AG04449 (cell line): ENCODE measurements at regions of chr4 and their contacts with region 1.

Region 1: DNA sequence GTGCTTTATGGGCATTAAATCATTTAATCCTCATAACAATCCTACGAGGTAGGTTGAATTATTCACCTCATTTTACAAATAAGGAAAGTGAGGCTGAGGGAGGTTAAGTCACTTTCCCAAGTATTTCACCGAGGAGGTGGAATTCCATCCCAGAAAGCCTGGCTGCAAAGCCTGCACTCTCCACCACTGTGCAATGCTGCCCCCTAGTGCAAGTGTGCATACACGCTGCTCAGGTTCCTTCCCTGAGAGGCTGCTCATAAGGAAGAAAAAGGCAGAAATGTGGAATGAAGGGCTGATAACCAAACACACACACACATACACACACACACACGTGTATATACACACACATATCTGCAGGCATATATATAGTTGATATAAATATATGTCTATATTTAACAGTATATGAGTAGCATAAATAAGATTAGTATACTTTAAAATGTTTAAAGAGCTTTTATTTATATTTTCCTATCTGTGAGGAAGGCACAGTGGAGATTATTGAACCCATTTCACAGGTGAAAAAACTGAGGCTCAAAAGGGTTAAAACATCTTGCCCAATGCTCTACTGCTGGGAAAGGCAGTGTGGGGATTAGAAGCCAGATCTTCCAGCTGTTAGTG is 714.5 kb upstream of the TENM3 start:
- DNase-seq: peak; percentile 19
- H3K4me3 ChIP-seq: no peak overlapping the region
- CTCF ChIP-seq: peak; percentile 92

Region 2: GRCh38 chr4:180664766-180665368 is 863.8 kb before region 1 on chr4:
- CTCF ChIA-PET with region 1: interaction called, 11 read pairs
- POLR2A ChIA-PET with region 1: no interaction called
- DNase-seq: peak; percentile 29
- H3K4me3 ChIP-seq: no peak overlapping the region
- CTCF ChIP-seq: peak; percentile 67

Region 3: DNA sequence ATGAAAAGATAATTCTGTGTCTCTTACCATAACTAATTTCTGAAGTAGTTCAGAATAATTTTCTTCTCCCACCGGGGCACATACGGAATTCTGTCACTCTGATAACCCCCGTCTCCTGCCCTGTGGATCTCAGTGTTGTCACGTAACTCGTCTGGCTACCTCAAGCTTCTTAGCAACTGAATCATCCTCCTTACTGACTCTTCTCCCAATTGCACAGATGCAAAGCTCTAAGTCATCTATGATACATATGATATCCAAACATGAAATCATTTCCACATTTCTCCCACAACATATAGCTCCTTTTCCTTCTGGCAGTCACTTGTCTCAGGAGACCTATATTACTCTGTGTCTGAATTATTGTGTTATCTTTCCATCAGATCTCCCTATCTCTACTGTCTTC is 328.6 kb before region 1 on chr4:
- CTCF ChIA-PET with region 1: no interaction called
- POLR2A ChIA-PET with region 1: no interaction called
- DNase-seq: no peak
- H3K4me3 ChIP-seq: no peak overlapping the region
- CTCF ChIP-seq: no peak

Region 4: DNA sequence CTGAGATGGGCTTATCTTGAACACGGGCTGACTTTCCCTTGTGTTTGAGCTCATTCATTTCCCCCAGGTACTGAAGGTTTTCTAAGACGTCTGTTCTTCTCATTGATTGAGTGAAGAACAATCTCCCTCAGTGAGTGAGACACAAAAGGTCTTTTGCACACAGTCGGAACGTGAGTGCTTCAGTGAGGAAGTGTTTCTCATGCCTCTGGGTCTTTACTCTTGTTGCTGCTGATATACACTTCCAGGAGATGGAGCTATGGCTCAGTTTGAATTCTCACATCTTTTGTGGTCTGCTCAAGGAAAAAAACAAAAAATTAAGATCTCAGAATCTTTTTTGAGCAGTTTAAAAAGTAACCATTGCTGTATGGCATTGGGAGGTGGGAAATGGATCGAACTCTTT is 267.4 kb before region 1 on chr4:
- CTCF ChIA-PET with region 1: interaction called, 24 read pairs
- POLR2A ChIA-PET with region 1: no interaction called
- DNase-seq: peak; percentile 3
- H3K4me3 ChIP-seq: no peak overlapping the region
- CTCF ChIP-seq: peak; percentile 12

Region 5: GRCh38 chr4:181416966-181417365 is 111.7 kb before region 1 on chr4:
- CTCF ChIA-PET with region 1: no interaction called
- POLR2A ChIA-PET with region 1: no interaction called
- DNase-seq: no peak
- H3K4me3 ChIP-seq: no peak overlapping the region
- CTCF ChIP-seq: no peak

Region 6: DNA sequence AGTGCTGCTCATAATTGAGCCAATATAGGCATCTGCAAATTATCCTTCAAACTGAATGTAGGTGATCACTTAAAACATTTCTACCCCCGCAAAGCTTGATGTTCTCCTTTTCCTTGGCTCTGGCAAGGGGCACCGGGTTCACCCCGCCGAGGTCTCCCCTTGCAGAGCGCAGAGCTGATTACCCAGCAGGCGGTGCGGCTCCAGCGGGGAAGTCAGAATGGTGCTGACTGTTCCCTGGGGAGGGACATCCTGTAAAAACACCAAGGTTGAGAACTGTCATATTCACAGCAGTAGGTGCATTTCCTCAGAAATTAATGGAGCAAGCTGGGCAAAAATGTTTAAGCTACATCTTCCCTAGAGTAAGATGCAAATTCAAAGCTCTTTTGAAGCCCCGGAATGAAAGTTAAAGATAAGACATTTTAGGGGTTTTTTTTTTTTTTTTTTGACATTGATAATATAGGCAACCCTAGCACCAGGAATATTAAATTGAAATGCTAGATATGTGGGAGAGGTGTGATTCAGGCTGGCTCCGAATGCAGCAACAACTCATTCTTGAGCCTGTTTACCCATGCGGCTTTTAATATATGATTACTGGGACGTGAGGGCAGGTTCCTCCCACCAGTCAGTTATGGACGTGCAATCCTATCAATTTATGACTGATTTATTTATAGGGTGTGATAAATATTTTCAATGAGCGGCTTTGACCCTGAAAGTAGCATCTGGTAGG is 52.7 kb before region 1 on chr4:
- CTCF ChIA-PET with region 1: interaction called, 14 read pairs
- POLR2A ChIA-PET with region 1: no interaction called
- DNase-seq: no peak
- H3K4me3 ChIP-seq: no peak overlapping the region
- CTCF ChIP-seq: no peak

Region 7: DNA sequence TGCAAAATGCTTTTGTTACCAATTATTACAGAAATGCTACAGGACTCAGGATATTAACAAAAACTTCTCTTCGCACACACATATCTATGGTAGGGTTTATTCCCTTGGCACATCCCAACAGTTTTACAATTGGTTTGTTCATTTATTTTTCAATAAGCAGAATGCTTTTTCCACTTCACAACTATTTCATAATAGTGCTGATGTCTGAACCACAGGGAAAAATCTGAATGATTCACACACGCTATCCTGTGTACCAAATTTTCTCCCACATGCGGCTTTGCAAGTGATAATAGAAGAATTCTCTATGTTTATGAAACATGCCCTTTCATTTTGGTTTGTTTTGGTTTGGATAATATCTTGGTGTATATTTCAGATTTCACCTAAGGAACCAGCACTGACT is 11.2 kb before region 1 on chr4:
- CTCF ChIA-PET with region 1: interaction called, 31 read pairs
- POLR2A ChIA-PET with region 1: no interaction called
- DNase-seq: no peak
- H3K4me3 ChIP-seq: no peak overlapping the region
- CTCF ChIP-seq: no peak